ENCODE measurements at regions of chr15 and their contacts with region 1.

Region 1: DNA sequence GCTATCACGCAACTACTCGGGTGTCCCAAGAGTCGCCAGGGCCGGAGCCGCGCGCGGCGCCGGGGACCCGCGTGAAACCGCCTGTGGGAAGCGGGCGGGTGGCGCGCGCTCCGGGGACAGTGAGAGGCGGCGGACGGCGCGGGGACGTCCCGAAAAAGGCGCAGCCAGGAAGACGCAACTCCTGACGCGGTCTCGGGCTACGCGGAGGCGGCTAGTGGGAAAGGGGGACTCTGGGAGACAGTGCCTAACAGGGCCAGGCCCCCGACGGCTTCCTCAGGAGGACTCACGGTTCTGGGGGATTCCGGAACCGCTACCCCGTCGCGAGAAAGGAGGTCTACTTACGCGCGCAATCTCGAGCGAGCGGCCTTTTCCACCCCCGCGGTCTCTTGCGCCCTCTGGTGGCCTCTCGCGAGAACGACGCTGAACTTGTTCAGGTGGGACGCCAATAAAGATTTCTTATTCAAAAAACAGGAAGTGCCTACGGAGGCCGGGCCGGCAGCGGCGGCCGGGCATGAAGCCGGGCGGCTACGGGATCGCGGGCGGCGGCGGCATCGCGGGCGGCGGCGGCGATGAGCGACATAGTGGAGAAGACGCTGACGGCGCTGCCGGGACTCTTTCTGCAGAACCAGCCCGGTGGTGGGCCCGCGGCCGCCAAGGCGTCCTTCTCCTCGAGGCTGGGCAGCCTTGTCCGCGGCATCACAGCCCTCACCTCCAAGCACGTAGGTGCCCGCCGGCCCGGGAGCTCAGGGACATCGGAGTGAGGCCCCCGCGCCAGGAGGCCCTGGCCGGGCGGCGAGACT is at the start of gene AP4E1:
- DNase-seq: peak; percentile 91
- H3K4me3 Mint-ChIP-seq: peak within 1 kb of the TSS; percentile 96
- H3K27ac Mint-ChIP-seq: peak within 1 kb of the TSS; percentile 98
- H3K4me1 Mint-ChIP-seq: peaks cover 15% of the 10 kb centered on the region
- H3K27me3 Mint-ChIP-seq: peaks cover 2% of the 10 kb centered on the region
- total RNA-seq, gene AP4E1: 15.8 and 17.0 TPM in 2 replicates

Region 2: GRCh38 chr15:50182219-50183013 is 726.0 kb before region 1 on chr15:
- intact Hi-C with region 1: loop called (anchors 5 kb)
- DNase-seq: peak; percentile 53
- H3K4me3 Mint-ChIP-seq: peak overlapping the region; percentile 96
- H3K27ac Mint-ChIP-seq: peak overlapping the region; percentile 88
- H3K4me1 Mint-ChIP-seq: peaks cover 60% of the 10 kb centered on the region
- H3K27me3 Mint-ChIP-seq: no peaks in the 10 kb centered on the region

Region 3: DNA sequence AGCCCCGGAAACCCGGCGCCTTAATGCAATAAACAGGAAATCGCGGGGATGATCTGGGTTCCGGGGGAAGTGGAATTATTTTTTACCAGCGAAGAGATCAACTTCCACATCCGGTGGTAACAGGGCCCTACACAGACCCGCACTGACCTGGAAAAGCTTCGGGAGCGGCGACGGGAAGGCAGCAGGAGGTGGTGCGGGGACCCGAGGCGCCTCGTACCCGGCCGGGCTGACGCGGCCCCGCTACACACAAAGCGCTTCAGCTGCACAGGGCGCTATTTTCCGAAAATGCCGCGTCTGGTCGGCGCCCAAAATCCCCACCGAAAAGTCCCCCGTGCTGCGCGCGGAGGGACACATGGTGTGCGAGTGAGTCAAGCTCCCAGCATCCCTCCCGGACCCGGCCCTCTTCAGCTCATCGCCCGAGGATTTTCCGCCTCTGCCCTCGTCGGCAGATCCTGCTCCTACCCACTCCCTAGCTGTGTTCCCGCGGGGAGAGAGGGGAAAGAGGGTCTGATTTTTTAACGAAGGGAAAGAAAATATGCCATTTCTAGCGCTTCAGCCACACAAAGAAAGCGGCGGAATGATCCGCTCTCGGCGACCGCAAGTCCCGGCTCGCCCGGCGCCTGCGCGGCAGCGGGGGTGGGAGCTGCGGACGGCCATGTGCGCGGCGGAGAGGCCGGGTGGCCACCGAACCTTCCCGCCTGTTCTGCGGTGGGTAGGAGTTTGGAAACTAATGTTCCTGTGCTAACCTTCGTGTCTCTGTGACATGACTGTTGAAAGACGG is 553.4 kb before region 1 on chr15 and contains the start of gene GABPB1:
- intact Hi-C with region 1: loop called (anchors 1 kb)
- DNase-seq: peak; percentile 87
- H3K4me3 Mint-ChIP-seq: peak within 1 kb of the TSS; percentile 100
- H3K27ac Mint-ChIP-seq: peak within 1 kb of the TSS; percentile 100
- H3K4me1 Mint-ChIP-seq: peaks cover 48% of the 10 kb centered on the region
- H3K27me3 Mint-ChIP-seq: no peaks in the 10 kb centered on the region
- total RNA-seq, gene GABPB1: 80.7 and 81.0 TPM in 2 replicates

Region 4: DNA sequence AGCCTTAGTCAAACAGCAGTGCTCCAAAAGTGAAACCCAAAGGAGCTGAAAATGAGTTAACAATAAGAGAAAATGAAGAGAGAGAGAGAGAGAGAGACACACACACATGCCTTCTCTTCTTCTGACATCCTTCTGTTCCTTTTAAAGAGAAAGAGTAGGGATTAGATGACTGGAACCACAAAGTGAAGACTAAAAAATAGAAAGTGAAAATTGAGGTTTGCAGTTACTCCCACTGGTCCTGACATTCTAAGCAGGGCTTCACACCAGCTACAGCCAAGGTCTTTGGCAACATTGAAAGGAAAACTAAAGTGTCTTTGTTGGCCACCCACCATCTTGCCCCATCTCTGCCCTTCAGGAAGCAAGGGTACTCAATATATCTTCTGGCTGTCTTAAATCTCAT is 421.1 kb before region 1 on chr15:
- intact Hi-C with region 1: loop called (anchors 1 kb)
- DNase-seq: no peak
- H3K4me3 Mint-ChIP-seq: no peak overlapping the region
- H3K27ac Mint-ChIP-seq: peak overlapping the region; percentile 4
- H3K4me1 Mint-ChIP-seq: peaks cover 14% of the 10 kb centered on the region
- H3K27me3 Mint-ChIP-seq: no peaks in the 10 kb centered on the region

Region 5: GRCh38 chr15:50675536-50676144 is 232.8 kb before region 1 on chr15:
- intact Hi-C with region 1: loop called (anchors 1 kb)
- DNase-seq: no peak
- H3K4me3 Mint-ChIP-seq: no peak overlapping the region
- H3K27ac Mint-ChIP-seq: no peak overlapping the region
- H3K4me1 Mint-ChIP-seq: peaks cover 15% of the 10 kb centered on the region
- H3K27me3 Mint-ChIP-seq: no peaks in the 10 kb centered on the region

Region 6: DNA sequence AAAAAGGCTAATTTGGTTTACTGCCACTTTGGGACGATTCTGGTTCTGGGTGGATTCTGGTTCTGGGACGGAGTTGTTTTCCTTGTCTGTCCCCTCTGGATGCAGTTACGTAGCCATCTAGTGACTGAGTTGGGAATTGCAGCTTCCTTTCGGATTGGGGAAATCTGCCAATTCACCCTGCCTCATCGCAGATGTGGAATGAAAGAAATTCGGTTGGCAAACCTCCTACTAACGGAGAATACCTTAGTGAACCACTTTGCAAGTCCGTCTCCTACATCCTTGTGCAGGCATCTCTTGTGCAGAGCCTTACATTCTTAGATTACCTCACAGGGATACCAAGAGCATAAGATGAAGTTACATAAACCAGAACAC is 31.4 kb before region 1 on chr15:
- intact Hi-C with region 1: loop called (anchors 1 kb)
- DNase-seq: peak; percentile 57
- H3K4me3 Mint-ChIP-seq: peak overlapping the region; percentile 58
- H3K27ac Mint-ChIP-seq: peak overlapping the region; percentile 31
- H3K4me1 Mint-ChIP-seq: peaks cover 57% of the 10 kb centered on the region
- H3K27me3 Mint-ChIP-seq: peaks cover 17% of the 10 kb centered on the region